K562 (cell line): ENCODE measurements at regions of chr17 and their contacts with region 1.

Region 1: GRCh38 chr17:73156166-73156840 is 8.5 kb upstream of the SSTR2 start:
- DNase-seq: peak; percentile 71 to 80 (median 74)
- ATAC-seq: peak; percentile 99
- H3K4me3 ChIP-seq: no peak overlapping the region
- H3K27ac ChIP-seq: no peak overlapping the region
- H3K4me1 ChIP-seq: peaks cover 2 to 10% of the 10 kb centered on the region in 2 experiments; a peak in 2 of 5 replicates
- H3K27me3 ChIP-seq: peaks cover 7 to 17% of the 10 kb centered on the region in 2 experiments; a peak in 4 of 5 replicates
- CTCF ChIP-seq: peak; percentile 81 to 87 (median 85)
- EP300 ChIP-seq: no peak
- POLR2A ChIP-seq: no peak
- RAD21 ChIP-seq: peak; percentile 71 to 92

Region 2: DNA sequence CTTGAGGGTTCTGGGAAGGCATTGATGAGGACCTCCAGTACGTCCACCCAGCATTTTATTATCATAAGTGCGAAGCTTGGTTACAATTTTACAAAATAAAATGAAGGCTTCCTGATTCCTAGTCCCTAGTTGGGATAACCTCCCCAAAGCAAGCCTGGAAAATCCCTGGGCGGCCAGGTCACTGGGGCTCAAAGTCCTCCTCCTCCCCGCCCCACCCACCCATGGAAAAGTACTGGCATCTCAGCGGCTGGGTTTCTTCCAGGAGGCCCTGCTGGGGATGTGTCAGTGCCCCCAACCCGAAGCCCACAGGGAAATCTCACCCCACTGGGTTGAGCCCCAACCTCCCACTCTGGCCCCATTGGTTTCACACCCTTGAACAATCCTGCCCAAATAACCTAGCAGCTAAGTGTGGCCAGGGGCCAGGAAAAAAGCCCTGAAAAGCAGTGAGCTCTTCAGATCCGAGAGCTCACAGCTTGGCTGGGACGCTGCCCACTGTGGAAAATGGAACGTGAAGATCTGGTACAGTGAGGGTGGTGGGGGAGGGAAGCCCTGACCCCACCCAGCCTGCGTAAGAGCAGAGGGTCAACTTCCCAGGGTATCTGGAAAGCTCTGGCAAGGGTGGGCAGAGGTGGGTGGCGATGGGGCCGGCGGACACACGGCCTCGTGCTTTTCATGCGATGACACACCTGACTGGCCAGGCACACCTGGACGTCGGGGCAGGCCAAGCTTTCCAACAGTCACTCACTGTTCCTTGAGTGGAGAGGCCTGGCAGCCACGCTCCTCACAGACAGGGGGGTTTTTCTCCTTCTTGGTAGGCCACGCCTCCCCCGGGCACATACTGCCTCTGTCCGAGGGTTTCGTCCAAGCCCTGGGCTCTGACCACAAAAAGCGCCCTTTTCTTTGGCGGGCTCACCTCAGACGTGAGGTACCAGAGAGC is 711.0 kb before region 1 on chr17:
- CTCF ChIA-PET with region 1: no interaction called
- POLR2A ChIA-PET with region 1: no interaction called
- in situ Hi-C with region 1: no loop called
- intact Hi-C with region 1: no loop called
- DNase-seq: no peak
- ATAC-seq: no peak
- H3K4me3 ChIP-seq: no peak overlapping the region
- H3K27ac ChIP-seq: no peak overlapping the region
- H3K4me1 ChIP-seq: no peaks in the 10 kb centered on the region
- H3K27me3 ChIP-seq: no peaks in the 10 kb centered on the region; a peak in 1 of 5 replicates
- CTCF ChIP-seq: no peak
- EP300 ChIP-seq: no peak
- POLR2A ChIP-seq: no peak
- RAD21 ChIP-seq: no peak

Region 3: DNA sequence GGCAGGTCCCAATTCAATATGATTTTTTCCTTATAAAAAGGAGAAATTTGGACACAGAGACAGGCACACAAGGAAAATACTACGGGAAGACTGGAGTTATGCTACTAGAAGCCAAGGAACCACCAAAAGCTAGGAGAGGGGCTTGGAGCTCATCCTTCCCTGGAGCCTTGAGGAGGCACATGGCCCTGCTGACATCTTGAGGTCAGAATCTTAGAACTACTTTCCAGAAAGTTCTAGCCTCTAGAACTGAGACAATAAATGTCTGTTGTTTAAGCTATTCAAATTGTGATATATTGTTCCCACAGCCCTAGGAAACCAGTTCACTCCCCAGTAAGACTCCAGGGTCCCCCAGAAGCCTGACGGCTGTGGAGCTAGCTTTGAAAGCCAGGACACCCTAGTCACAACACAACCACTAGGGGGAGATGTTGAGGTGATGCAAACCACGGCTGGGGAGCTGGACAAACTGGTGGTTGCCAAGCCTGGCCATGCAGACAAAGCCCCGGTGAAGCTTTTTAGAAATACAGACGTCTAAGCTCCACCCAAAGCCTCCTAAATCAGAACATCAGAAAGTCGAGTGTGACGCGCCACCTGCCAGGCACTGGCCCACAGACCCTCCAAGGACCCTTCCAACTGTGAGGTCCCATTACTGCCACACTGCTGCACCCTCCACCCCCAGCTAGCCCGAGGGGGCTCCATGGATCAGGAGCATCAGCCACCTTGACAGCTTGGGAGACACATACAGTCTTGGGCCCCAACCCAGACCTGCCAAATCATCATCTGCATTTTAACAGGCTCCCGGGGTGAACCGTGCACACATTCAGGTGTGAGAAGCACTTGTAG is 170.2 kb before region 1 on chr17:
- CTCF ChIA-PET with region 1: no interaction called
- POLR2A ChIA-PET with region 1: interaction called, 3 read pairs
- in situ Hi-C with region 1: loop called (anchors 10 kb)
- intact Hi-C with region 1: loop called (anchors 1 kb)
- DNase-seq: peak; percentile 82 to 85 (median 84)
- ATAC-seq: peak; percentile 99
- H3K4me3 ChIP-seq: no peak overlapping the region
- H3K27ac ChIP-seq: no peak overlapping the region
- H3K4me1 ChIP-seq: peaks cover 0 to 7% of the 10 kb centered on the region in 2 experiments; a peak in 2 of 5 replicates
- H3K27me3 ChIP-seq: no peaks in the 10 kb centered on the region
- CTCF ChIP-seq: peak; percentile 84 to 89 (median 88)
- EP300 ChIP-seq: no peak
- POLR2A ChIP-seq: no peak
- RAD21 ChIP-seq: peak; percentile 60 to 85

Region 4: GRCh38 chr17:72997559-72997958 is 158.7 kb before region 1 on chr17:
- CTCF ChIA-PET with region 1: no interaction called
- POLR2A ChIA-PET with region 1: no interaction called
- in situ Hi-C with region 1: loop called (anchors 10 kb)
- intact Hi-C with region 1: no loop called
- DNase-seq: no peak
- ATAC-seq: no peak
- H3K4me3 ChIP-seq: no peak overlapping the region
- H3K27ac ChIP-seq: no peak overlapping the region
- H3K4me1 ChIP-seq: peaks cover 0 to 21% of the 10 kb centered on the region in 2 experiments; a peak in 4 of 5 replicates
- H3K27me3 ChIP-seq: no peaks in the 10 kb centered on the region
- CTCF ChIP-seq: no peak
- EP300 ChIP-seq: peak; percentile 57; the same call in 1 of the 2 replicates
- POLR2A ChIP-seq: no peak
- RAD21 ChIP-seq: no peak